Gastrocnemius medialis (tissue), 4 donors: ENCODE measurements at regions of chrX and their contacts with region 1.

Region 1: GRCh38 chrX:68828740-68829552 is at the start of gene EFNB1:
- DNase-seq: peak; percentile 90 to 92
- ATAC-seq: peak; percentile 86 to 88
- H3K4me3 ChIP-seq: peak within 1 kb of the TSS; percentile 72 to 86 (median 75)
- H3K27ac ChIP-seq: peak within 1 kb of the TSS; percentile 81 to 89 (median 86)
- H3K4me1 ChIP-seq: no peaks in the 10 kb centered on the region
- H3K27me3 ChIP-seq: no peaks in the 10 kb centered on the region
- CTCF ChIP-seq: no peak
- POLR2A ChIP-seq: peak; percentile 86 to 97
- total RNA-seq, gene EFNB1: 8.8 to 15.7 (median 13.0) TPM

Region 2: DNA sequence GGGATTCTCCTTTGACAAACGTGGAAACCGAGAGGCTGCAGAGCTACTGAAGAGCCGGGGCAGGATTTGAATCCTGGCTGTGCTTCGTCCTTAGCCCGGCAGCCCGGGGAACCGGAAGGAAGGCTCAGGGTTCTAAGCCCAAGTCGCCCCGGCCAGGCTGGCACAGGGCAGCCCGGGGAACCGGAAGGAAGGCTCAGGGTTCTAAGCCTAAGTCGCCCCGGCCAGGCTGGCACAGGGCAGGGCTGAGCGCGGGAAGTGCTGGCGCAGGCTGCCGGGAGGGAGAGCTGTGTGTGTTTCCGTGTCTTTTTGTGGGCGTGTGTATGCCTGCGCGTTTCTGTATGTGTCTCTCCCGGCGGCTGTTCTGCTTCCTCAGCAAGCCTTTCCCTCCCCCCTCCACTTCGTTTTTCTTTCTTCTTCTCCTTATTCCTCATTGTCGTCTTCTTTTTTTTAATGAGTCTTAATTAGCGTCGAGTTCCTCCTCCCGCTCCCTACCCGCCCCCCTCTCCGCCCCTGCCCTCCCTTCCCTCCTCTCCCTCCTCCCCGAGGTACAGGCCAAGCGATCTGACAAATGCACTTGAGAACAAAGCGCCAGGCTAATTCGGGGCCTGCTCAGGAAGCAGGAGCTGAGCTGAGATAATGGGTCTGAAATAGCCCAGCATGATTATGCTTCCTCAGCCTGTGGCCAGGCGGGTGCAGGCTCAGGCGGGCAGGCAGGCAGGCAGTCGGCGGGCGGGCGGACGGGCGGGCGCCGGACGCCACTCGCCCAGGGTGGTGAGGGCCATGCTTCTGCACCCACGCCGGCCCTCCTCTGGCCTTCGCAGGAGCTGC is 65.8 kb after region 1 on chrX:
- in situ Hi-C with region 1: no loop called
- intact Hi-C with region 1: loop called (anchors 1 kb)
- DNase-seq: peak; percentile 41 to 69
- ATAC-seq: peak; percentile 84 to 87
- H3K4me3 ChIP-seq: peak overlapping the region; percentile 46 to 51 (median 48)
- H3K27ac ChIP-seq: peak overlapping the region; percentile 88 to 92 (median 90)
- H3K4me1 ChIP-seq: peaks cover 12 to 15% of the 10 kb centered on the region in 2 donors
- H3K27me3 ChIP-seq: no peaks in the 10 kb centered on the region
- CTCF ChIP-seq: no peak
- POLR2A ChIP-seq: peak; percentile 47 to 76

Region 3: GRCh38 chrX:69027181-69028005 is 198.4 kb after region 1 on chrX:
- in situ Hi-C with region 1: loop called in 1 of 4 experiments (anchors 25 kb)
- intact Hi-C with region 1: no loop called
- DNase-seq: no peak
- ATAC-seq: no peak
- H3K4me3 ChIP-seq: no peak overlapping the region
- H3K27ac ChIP-seq: peak overlapping the region in 1 of 4 donors; percentile 4
- H3K4me1 ChIP-seq: no peaks in the 10 kb centered on the region
- H3K27me3 ChIP-seq: no peaks in the 10 kb centered on the region
- CTCF ChIP-seq: no peak
- POLR2A ChIP-seq: no peak

Region 4: DNA sequence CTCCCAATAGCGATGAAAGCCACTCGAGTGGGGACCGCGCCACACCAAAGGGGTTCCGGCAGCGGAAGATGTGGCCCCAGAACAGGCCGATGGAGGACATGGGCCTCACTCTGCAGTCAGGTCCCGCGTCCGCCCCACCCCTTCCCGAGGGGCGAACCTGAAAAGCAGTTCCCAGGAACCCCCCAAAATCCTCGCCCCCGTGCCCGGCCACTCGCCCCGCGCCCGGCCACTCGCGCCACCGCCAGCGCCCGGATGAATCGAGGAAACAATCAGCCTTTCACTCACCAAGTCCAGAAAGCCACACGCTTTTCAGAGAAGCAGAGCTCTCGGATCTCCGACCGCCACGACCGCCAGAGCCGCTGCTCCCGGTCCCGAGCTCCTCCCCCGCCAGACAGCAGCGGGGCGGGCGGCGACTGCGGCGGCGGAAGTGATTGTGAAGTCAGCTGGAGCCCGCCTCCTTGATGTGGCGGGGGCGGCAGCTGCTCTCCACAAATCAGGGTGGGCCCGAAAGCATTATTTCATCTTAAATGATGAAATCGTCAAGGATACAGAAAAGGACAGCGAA is 336.2 kb after region 1 on chrX and contains the start of gene PJA1:
- in situ Hi-C with region 1: no loop called
- intact Hi-C with region 1: loop called (anchors 2 kb)
- DNase-seq: peak; percentile 31 to 47
- ATAC-seq: peak; percentile 76 to 85
- H3K4me3 ChIP-seq: peak within 1 kb of the TSS; percentile 59 to 81 (median 70)
- H3K27ac ChIP-seq: peak within 1 kb of the TSS; percentile 67 to 78 (median 74)
- H3K4me1 ChIP-seq: no peaks in the 10 kb centered on the region
- H3K27me3 ChIP-seq: peaks cover 0 to 2% (median 0%) of the 10 kb centered on the region in 3 donors
- CTCF ChIP-seq: no peak
- POLR2A ChIP-seq: peak; percentile 46 to 59
- total RNA-seq, gene PJA1: 2.5 to 9.6 (median 7.6) TPM

Region 5: GRCh38 chrX:69285881-69286564 is 457.1 kb after region 1 on chrX:
- in situ Hi-C with region 1: loop called in 3 of 4 experiments (anchors 5 to 10 kb)
- intact Hi-C with region 1: no loop called
- DNase-seq: peak in 1 of 2 donors; percentile 15
- ATAC-seq: peak; percentile 58 to 62
- H3K4me3 ChIP-seq: peak overlapping the region; percentile 42 to 50 (median 47)
- H3K27ac ChIP-seq: no peak overlapping the region
- H3K4me1 ChIP-seq: peaks cover 0 to 4% of the 10 kb centered on the region in 2 donors
- H3K27me3 ChIP-seq: no peaks in the 10 kb centered on the region
- CTCF ChIP-seq: peak; percentile 54 to 90 (median 80)
- POLR2A ChIP-seq: no peak